MCF 10A (cell line): ENCODE measurements at regions of chr11 and their contacts with region 1.

Region 1: DNA sequence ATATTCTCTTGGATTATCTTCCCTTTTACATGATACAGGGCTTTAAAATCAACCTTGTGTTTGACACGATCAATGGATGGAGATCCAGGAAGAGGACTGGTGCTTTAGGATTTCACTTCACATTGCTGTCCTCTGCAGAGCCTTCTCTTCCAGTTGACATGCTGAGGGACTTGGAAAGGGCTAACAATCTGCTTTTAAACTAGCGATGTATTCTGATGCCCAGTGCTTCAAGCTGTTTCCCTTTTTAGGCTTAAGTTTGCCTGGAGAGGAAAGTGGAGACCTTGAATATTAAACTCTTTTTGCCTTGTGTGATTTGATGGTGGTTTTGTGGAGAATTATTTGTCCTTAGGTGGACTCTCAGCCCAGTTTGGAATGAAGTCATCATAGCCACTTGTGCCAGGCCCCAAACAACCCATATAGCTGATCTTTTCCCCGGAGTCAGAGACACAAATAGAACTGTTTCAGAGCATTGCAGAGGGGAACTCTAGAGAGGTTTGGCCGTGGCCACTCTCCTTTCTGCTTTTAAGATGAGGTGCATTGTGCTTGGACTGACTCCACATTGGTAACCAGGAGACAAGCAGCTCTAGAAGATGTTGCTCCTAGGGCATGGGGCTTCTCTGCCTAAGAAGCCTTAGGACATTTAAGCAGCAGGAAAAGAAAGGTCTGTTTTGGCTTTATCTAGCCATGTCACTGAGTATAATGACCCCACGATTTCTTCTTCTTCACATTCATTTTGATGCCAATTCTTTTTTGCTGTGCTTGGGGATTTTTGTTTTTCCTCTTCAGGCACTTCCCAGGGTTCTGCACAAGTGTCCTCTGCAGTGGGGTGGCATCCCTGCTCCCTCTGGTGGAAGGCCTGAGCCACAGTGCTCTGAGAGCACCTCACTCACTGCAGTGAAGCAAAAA is 152.8 kb downstream of the NCAM1 start:
- DNase-seq: peak; percentile 66
- H3K4me3 Mint-ChIP-seq: no peak overlapping the region
- H3K27ac Mint-ChIP-seq: no peak overlapping the region
- H3K4me1 Mint-ChIP-seq: peaks cover 5% of the 10 kb centered on the region
- H3K27me3 Mint-ChIP-seq: no peaks in the 10 kb centered on the region
- CTCF ChIP-seq: peak; percentile 83

Region 2: DNA sequence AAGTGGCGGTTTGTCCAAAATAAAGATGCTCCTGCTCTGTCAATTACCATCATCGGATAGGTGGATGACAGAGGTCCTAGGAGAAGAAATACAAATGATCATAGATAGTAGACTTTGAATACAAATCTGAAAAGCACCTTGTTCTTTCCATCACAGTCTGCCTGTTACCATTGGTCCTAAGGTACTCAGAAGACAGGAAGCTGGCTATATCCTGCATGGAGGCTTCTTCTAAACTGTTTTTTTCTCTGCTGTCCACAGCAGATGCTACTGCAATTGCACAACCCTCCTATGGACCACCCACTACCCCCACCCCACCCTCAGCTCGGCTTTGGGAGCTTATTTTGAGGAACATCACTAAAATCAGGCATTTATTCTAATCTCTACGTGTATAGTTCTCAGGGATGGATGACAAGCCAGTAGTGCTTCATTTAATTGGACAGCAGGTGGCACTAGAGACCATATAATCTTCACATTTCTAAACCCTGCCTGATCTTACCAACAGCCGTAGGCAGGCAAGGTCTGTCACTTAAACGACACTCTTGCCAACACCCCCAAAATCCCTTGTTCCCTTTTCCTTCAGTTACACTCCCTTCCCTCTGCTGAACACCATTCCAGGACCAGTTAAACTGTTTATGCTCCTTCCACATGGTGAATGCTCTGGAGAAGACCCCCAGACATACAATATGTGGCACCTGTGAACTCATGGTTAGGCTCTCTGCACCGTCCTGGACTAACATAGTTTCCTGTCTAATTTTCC is 894.4 kb before region 1 on chr11:
- CTCF ChIA-PET with region 1: no interaction called
- POLR2A ChIA-PET with region 1: no interaction called
- intact Hi-C with region 1: loop called (anchors 10 kb)
- DNase-seq: peak; percentile 84
- H3K4me3 Mint-ChIP-seq: no peak overlapping the region
- H3K27ac Mint-ChIP-seq: peak overlapping the region; percentile 21
- H3K4me1 Mint-ChIP-seq: peaks cover 27% of the 10 kb centered on the region
- H3K27me3 Mint-ChIP-seq: no peaks in the 10 kb centered on the region
- CTCF ChIP-seq: peak; percentile 76

Region 3: DNA sequence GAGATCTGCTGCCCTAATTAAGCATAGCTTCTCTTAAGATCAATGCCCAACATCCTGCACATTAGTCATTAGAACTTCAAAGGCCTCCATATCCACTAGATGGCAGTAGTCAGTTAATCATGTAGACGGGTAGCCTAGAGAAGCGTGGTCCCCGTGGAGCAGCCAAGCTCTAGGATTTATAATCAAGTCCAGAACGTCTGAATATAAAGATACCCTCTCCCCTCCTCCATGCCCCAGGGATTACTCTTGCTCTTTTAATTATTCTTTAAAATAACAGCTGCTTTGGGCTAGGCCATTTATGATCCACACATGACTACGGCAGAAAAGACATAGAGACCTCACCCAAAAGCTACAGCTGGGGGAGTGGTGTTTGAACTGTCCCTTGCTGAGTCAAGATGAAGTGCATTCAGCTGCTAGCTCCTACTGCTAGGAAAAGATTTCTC is 525.8 kb before region 1 on chr11:
- CTCF ChIA-PET with region 1: interaction called, 69 read pairs
- POLR2A ChIA-PET with region 1: interaction called, 3 read pairs
- intact Hi-C with region 1: loop called (anchors 1 kb)
- DNase-seq: peak; percentile 88
- H3K4me3 Mint-ChIP-seq: no peak overlapping the region
- H3K27ac Mint-ChIP-seq: no peak overlapping the region
- H3K4me1 Mint-ChIP-seq: no peaks in the 10 kb centered on the region
- H3K27me3 Mint-ChIP-seq: no peaks in the 10 kb centered on the region
- CTCF ChIP-seq: peak; percentile 66

Region 4: DNA sequence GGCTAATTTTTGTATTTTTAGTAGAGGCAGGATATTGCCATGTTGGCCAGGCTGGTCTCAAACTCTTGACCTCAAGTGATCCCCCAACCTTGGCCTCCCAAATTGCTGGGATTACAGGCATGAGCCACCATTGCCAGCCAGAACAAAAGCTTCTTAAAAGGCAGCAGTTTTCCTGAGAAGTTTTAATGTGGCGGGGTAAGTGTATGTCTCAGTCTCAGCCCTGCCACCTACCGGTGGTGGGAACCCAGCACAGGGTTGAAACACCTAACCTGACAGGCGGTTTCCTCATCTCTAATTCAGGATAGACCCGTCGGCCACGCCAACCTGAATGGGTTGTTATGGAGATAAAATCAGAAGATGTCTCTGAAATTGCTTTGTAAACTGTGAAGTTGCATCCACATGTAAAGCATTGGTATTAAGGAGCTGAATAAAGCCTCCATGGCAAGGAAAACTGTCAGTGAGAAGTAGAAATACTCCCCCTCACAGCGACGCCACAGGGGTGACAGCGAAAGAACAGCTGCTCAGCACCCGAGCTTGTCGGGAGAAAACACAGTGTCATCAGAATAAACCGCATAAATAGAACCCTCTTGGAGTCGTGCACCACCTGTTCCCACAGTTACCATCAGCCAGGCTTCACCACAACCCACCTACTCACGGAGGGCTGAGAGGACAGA is 318.8 kb before region 1 on chr11:
- CTCF ChIA-PET with region 1: interaction called, 71 read pairs
- POLR2A ChIA-PET with region 1: no interaction called
- intact Hi-C with region 1: loop called (anchors 1 kb)
- DNase-seq: peak; percentile 72
- H3K4me3 Mint-ChIP-seq: no peak overlapping the region
- H3K27ac Mint-ChIP-seq: no peak overlapping the region
- H3K4me1 Mint-ChIP-seq: no peaks in the 10 kb centered on the region
- H3K27me3 Mint-ChIP-seq: no peaks in the 10 kb centered on the region
- CTCF ChIP-seq: peak; percentile 77

Region 5: GRCh38 chr11:112958670-112959069 is 155.4 kb before region 1 on chr11:
- CTCF ChIA-PET with region 1: interaction called, 6 read pairs
- POLR2A ChIA-PET with region 1: no interaction called
- intact Hi-C with region 1: loop called (anchors 5 kb)
- DNase-seq: peak; percentile 52
- H3K4me3 Mint-ChIP-seq: no peak overlapping the region
- H3K27ac Mint-ChIP-seq: no peak overlapping the region
- H3K4me1 Mint-ChIP-seq: peaks cover 14% of the 10 kb centered on the region
- H3K27me3 Mint-ChIP-seq: peaks cover 67% of the 10 kb centered on the region
- CTCF ChIP-seq: peak; percentile 6

Region 6: DNA sequence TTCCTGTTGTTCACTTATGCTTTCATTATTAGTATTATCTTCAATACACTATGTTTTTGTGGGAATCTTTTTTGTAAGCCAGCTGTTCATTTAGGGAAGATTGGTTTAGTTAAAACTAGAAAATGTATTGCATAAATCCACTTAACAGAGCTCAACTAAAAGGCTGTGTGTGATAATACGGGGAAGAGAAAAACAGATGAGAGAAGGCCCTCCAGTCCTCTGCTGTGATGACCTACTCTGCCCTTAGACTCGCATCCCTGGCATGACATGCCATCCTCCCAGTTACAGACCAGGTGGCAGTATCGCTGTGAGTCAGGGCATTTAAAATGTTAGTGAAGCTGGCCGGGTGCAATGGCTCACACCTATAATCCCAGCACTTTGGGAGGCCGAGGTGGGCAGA is 27.0 kb after region 1 on chr11:
- CTCF ChIA-PET with region 1: interaction called, 11 read pairs
- POLR2A ChIA-PET with region 1: no interaction called
- intact Hi-C with region 1: no loop called
- DNase-seq: no peak
- H3K4me3 Mint-ChIP-seq: no peak overlapping the region
- H3K27ac Mint-ChIP-seq: no peak overlapping the region
- H3K4me1 Mint-ChIP-seq: no peaks in the 10 kb centered on the region
- H3K27me3 Mint-ChIP-seq: peaks cover 25% of the 10 kb centered on the region
- CTCF ChIP-seq: no peak